ENCODE measurements at regions of chr2 and their contacts with region 1.

Region 1: GRCh38 chr2:45643543-45644542 is 7.6 kb upstream of the PRKCE start:
- DNase-seq: peak; percentile 56 to 88 (median 73)
- ATAC-seq: peak; percentile 97
- H3K4me3 ChIP-seq: peak overlapping the region; percentile 22 to 41
- H3K4me3 Mint-ChIP-seq: peak overlapping the region; percentile 49
- H3K27ac ChIP-seq: no peak overlapping the region
- H3K27ac Mint-ChIP-seq: no peak overlapping the region
- H3K4me1 ChIP-seq: peaks cover 9% of the 10 kb centered on the region
- H3K4me1 Mint-ChIP-seq: peaks cover 6% of the 10 kb centered on the region
- H3K27me3 ChIP-seq: peaks cover 0 to 13% of the 10 kb centered on the region in 2 experiments
- H3K27me3 Mint-ChIP-seq: peaks cover 18% of the 10 kb centered on the region
- CTCF ChIP-seq: peak; percentile 81

Region 2: DNA sequence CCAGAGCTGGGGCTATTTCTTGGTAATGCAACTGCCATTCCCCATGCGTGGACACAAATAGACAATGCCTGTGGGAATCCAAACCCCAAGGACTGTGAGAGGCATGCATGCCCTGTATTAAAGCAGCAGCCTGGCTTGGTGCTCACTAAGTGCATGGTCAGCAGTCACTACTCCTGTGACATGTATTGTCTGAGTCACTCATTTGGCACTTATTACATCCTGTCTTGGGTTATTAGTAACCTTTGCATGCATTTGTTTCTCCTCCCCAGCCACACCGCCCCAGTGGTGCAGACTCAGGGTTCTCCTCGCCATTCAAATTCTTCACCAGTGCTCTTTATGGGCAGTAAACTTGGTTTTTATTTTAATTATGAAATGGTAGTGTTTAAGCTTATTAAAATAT is 37.8 kb after region 1 on chr2:
- CTCF ChIA-PET with region 1: no interaction called
- POLR2A ChIA-PET with region 1: no interaction called
- intact Hi-C with region 1: loop called in 1 of 2 experiments (anchors 1 kb)
- DNase-seq: no peak
- ATAC-seq: no peak
- H3K4me3 ChIP-seq: no peak overlapping the region
- H3K4me3 Mint-ChIP-seq: no peak overlapping the region
- H3K27ac ChIP-seq: no peak overlapping the region
- H3K27ac Mint-ChIP-seq: no peak overlapping the region
- H3K4me1 ChIP-seq: no peaks in the 10 kb centered on the region
- H3K4me1 Mint-ChIP-seq: peaks cover 3% of the 10 kb centered on the region
- H3K27me3 ChIP-seq: no peaks in the 10 kb centered on the region
- H3K27me3 Mint-ChIP-seq: no peaks in the 10 kb centered on the region
- CTCF ChIP-seq: no peak

Region 3: DNA sequence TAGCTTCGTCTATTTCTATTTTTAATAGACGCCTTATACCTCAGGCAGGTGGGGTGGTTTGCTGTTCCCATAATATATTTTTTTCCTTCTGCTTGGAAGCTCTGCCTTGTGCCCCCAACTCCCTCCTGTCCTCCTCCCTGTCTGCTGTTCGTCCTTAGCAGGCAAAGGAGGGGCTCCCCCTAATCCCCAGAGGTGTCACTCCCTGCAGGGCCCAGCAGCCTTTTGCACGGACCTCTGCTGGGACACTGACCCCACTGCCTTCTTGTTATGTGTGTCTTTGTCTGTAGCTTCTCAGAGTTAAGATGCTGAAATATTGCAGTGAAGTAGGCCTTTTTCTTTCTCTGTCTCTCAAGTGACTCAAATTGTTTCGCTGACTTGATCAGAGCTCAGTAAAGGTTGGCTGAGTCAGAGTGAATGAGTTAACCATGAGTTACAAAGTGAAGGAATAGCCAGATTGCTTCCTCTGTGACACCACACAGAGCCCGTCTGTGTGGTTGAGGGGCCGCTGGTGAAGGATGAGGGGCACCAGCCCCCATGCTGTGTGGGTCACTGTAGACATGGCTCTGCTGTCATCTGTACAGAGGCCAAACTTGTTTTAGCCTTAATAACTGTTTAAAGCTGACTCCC is 55.3 kb after region 1 on chr2:
- CTCF ChIA-PET with region 1: no interaction called
- POLR2A ChIA-PET with region 1: no interaction called
- intact Hi-C with region 1: no loop called
- DNase-seq: no peak
- ATAC-seq: no peak
- H3K4me3 ChIP-seq: no peak overlapping the region
- H3K4me3 Mint-ChIP-seq: no peak overlapping the region
- H3K27ac ChIP-seq: no peak overlapping the region
- H3K27ac Mint-ChIP-seq: no peak overlapping the region
- H3K4me1 ChIP-seq: no peaks in the 10 kb centered on the region
- H3K4me1 Mint-ChIP-seq: peaks cover 9% of the 10 kb centered on the region
- H3K27me3 ChIP-seq: no peaks in the 10 kb centered on the region
- H3K27me3 Mint-ChIP-seq: no peaks in the 10 kb centered on the region
- CTCF ChIP-seq: no peak

Region 4: GRCh38 chr2:45729753-45730512 is 86.1 kb after region 1 on chr2:
- CTCF ChIA-PET with region 1: interaction called, 4 read pairs
- POLR2A ChIA-PET with region 1: no interaction called
- intact Hi-C with region 1: loop called in 1 of 2 experiments (anchors 5 kb)
- DNase-seq: peak in 2 of 9 experiments; percentile 10 to 34
- ATAC-seq: no peak
- H3K4me3 ChIP-seq: no peak overlapping the region
- H3K4me3 Mint-ChIP-seq: no peak overlapping the region
- H3K27ac ChIP-seq: no peak overlapping the region
- H3K27ac Mint-ChIP-seq: peak overlapping the region; percentile 34
- H3K4me1 ChIP-seq: no peaks in the 10 kb centered on the region
- H3K4me1 Mint-ChIP-seq: peaks cover 3% of the 10 kb centered on the region
- H3K27me3 ChIP-seq: no peaks in the 10 kb centered on the region
- H3K27me3 Mint-ChIP-seq: no peaks in the 10 kb centered on the region
- CTCF ChIP-seq: no peak

Region 5: GRCh38 chr2:45778720-45779171 is 134.9 kb after region 1 on chr2:
- CTCF ChIA-PET with region 1: interaction called, 81 read pairs
- POLR2A ChIA-PET with region 1: interaction called, 5 read pairs
- intact Hi-C with region 1: loop called (anchors 1 kb)
- DNase-seq: peak; percentile 37 to 85 (median 72)
- ATAC-seq: peak; percentile 90
- H3K4me3 ChIP-seq: peak overlapping the region in 1 of 2 experiments; percentile 29
- H3K4me3 Mint-ChIP-seq: peak overlapping the region; percentile 54
- H3K27ac ChIP-seq: no peak overlapping the region
- H3K27ac Mint-ChIP-seq: no peak overlapping the region
- H3K4me1 ChIP-seq: peaks cover 5% of the 10 kb centered on the region
- H3K4me1 Mint-ChIP-seq: peaks cover 5% of the 10 kb centered on the region
- H3K27me3 ChIP-seq: no peaks in the 10 kb centered on the region
- H3K27me3 Mint-ChIP-seq: no peaks in the 10 kb centered on the region
- CTCF ChIP-seq: peak; percentile 93

Region 6: DNA sequence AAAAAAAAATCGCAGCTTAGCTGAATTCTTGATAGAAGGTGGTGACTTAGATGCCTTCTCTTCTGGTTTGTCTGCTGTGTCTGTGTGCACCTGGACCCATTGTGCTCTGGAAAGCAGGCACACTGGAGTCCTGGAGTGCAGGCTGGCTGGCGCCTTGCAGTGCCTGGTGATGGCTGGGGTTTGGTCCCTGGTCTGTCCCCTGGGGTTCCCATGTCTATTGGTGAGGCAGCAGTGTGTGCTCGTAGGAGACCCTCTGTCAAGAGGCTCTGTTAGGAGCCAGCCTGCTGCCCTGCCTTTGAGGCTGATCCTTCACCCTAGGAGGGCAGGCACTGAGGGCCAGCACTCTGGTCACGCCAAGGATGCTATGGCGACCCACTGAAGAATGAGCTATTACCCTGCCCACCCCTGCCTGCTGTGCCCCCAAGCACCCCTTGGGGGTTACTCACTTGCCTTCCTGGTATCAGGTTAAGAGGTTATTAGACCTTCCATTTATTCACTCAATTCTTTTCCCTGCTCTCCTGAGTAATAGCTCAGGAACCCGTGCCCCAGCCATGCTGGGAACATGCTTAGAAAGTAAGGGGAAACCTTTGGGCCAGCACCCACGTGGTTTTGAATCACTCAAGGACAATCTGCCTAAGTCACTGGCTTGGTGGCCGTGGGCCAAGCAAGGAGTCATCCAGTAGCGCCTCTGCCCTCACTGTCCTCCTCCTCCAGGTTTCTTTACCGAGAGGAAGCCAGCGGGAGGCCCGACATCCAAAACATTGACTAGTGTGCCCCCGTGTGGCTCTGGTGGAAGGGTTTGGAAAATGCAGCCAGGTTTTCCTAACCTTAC is 292.2 kb after region 1 on chr2:
- CTCF ChIA-PET with region 1: interaction called, 6 read pairs
- POLR2A ChIA-PET with region 1: no interaction called
- intact Hi-C with region 1: loop called in 1 of 2 experiments (anchors 1 kb)
- DNase-seq: peak in 7 of 9 experiments; percentile 7 to 64 (median 37)
- ATAC-seq: no peak
- H3K4me3 ChIP-seq: no peak overlapping the region
- H3K4me3 Mint-ChIP-seq: no peak overlapping the region
- H3K27ac ChIP-seq: no peak overlapping the region
- H3K27ac Mint-ChIP-seq: no peak overlapping the region
- H3K4me1 ChIP-seq: peaks cover 4% of the 10 kb centered on the region
- H3K4me1 Mint-ChIP-seq: peaks cover 3% of the 10 kb centered on the region
- H3K27me3 ChIP-seq: no peaks in the 10 kb centered on the region
- H3K27me3 Mint-ChIP-seq: no peaks in the 10 kb centered on the region
- CTCF ChIP-seq: peak; percentile 25

Measured in CD8-positive, alpha-beta T cell (primary cell).